ENCODE measurements at regions of chr6 and their contacts with region 1.

Region 1: DNA sequence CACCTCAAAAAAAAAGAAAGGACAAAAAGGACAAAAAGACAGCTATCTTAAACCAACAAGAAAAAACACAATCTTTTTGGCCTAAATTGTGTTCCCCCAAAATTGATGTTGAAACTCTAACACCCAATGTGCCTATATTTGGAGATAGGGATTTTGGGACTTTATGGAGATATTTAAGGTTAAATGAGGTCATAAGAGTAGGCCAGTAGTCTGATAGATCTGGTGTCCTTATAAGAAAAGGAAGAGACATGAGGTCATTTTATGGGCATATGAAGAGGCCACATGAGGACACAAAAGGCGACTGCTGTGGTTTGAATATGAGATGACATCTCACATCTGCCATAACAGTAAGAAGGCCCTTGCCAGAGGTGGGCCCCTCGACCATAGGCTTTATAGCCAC is 49.5 kb downstream of the TRIM38 start:
- DNase-seq: no peak
- ATAC-seq: no peak
- H3K4me3 ChIP-seq: no peak overlapping the region
- H3K27ac ChIP-seq: no peak overlapping the region
- H3K4me1 ChIP-seq: no peaks in the 10 kb centered on the region
- H3K27me3 ChIP-seq: no peaks in the 10 kb centered on the region
- CTCF ChIP-seq: no peak
- EP300 ChIP-seq: no peak
- POLR2A ChIP-seq: no peak
- RAD21 ChIP-seq: no peak

Region 2: DNA sequence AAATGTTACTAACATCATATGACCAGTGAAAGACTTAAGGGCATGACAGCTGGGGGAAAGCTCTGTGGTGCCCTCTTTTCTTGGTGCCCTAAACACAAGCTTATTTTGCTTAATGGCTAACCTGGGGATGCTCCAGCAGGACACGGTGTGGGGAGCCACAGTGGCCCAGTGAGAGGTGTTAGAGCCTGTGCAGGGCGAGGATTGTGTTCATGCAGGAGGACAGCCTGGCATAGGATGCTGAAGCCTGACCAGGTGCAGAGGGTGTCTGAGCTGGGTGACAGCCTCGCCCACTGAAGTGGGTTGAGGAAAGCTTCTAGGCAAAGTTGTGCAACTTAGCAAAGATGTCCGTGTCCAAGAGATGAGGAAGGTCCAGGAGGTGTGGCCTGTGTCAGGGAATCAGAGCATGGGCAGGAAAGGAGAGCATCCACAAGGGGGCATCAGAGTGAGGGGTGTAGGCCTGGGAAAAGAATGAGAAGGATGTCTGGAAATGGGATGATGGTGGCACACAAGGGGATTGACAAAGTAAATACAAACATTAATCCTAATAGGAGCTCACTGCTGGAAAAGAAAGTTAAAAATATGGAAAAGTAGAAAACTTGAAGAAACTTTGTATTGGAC is 223.6 kb before region 1 on chr6:
- CTCF ChIA-PET with region 1: interaction called, 17 read pairs
- POLR2A ChIA-PET with region 1: no interaction called
- RAD21 ChIA-PET with region 1: no interaction called
- SMC1A ChIA-PET with region 1: no interaction called
- in situ Hi-C with region 1: no loop called
- intact Hi-C with region 1: no loop called
- DNase-seq: no peak
- ATAC-seq: peak; percentile 82
- H3K4me3 ChIP-seq: no peak overlapping the region
- H3K27ac ChIP-seq: no peak overlapping the region
- H3K4me1 ChIP-seq: no peaks in the 10 kb centered on the region
- H3K27me3 ChIP-seq: no peaks in the 10 kb centered on the region; a peak in 1 of 4 replicates
- CTCF ChIP-seq: peak; percentile 55 to 69 (median 56); a peak in 5 of 6 replicates
- EP300 ChIP-seq: no peak
- POLR2A ChIP-seq: no peak
- RAD21 ChIP-seq: peak; percentile 58

Region 3: GRCh38 chr6:25997921-25998320 is 14.1 kb before region 1 on chr6:
- CTCF ChIA-PET with region 1: interaction called, 112 read pairs
- POLR2A ChIA-PET with region 1: interaction called, 11 read pairs
- RAD21 ChIA-PET with region 1: interaction called, 3 read pairs
- SMC1A ChIA-PET with region 1: interaction called, 76 read pairs
- in situ Hi-C with region 1: no loop called
- intact Hi-C with region 1: no loop called
- DNase-seq: no peak
- ATAC-seq: no peak
- H3K4me3 ChIP-seq: no peak overlapping the region
- H3K27ac ChIP-seq: no peak overlapping the region
- H3K4me1 ChIP-seq: peaks cover 4% of the 10 kb centered on the region
- H3K27me3 ChIP-seq: no peaks in the 10 kb centered on the region
- CTCF ChIP-seq: no peak
- EP300 ChIP-seq: no peak
- POLR2A ChIP-seq: no peak
- RAD21 ChIP-seq: no peak